ENCODE measurements at regions of chr5 and their contacts with region 1.

Region 1: GRCh38 chr5:128674825-128675446 is 136.9 kb upstream of the FBN2 start:
- DNase-seq: peak in 1 of 2 experiments; percentile 83
- H3K4me3 ChIP-seq: no peak overlapping the region
- H3K27ac ChIP-seq: no peak overlapping the region
- H3K4me1 ChIP-seq: peaks cover 0 to 3% (median 0%) of the 10 kb centered on the region in 4 experiments; a peak in 3 of 7 replicates
- H3K27me3 ChIP-seq: no peaks in the 10 kb centered on the region
- CTCF ChIP-seq: peak; percentile 41 to 82 (median 69)
- EP300 ChIP-seq: no peak
- POLR2A ChIP-seq: no peak
- RAD21 ChIP-seq: peak; percentile 73 to 80

Region 2: DNA sequence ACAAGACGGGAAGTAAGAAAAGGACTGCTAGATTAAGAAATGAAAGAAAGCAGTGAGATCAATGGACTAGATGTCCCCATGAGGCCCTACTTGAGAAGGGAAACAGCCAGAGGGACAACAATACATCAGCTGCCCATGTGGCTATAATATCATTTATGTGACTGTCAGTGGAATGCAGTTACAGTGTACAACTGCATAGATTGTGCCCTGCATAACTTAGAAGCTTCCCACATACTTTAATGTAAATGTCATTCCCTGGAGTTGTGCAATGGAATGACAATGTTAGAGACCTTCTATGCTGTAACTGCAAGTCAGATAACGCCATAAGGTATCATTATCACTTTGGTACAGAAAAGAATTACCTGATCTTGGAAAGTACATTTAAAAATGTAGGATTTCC is 204.3 kb before region 1 on chr5:
- CTCF ChIA-PET with region 1: no interaction called
- POLR2A ChIA-PET with region 1: no interaction called
- DNase-seq: no peak
- H3K4me3 ChIP-seq: no peak overlapping the region
- H3K27ac ChIP-seq: no peak overlapping the region
- H3K4me1 ChIP-seq: no peaks in the 10 kb centered on the region
- H3K27me3 ChIP-seq: no peaks in the 10 kb centered on the region
- CTCF ChIP-seq: no peak
- EP300 ChIP-seq: no peak
- POLR2A ChIP-seq: no peak
- RAD21 ChIP-seq: no peak

Region 3: DNA sequence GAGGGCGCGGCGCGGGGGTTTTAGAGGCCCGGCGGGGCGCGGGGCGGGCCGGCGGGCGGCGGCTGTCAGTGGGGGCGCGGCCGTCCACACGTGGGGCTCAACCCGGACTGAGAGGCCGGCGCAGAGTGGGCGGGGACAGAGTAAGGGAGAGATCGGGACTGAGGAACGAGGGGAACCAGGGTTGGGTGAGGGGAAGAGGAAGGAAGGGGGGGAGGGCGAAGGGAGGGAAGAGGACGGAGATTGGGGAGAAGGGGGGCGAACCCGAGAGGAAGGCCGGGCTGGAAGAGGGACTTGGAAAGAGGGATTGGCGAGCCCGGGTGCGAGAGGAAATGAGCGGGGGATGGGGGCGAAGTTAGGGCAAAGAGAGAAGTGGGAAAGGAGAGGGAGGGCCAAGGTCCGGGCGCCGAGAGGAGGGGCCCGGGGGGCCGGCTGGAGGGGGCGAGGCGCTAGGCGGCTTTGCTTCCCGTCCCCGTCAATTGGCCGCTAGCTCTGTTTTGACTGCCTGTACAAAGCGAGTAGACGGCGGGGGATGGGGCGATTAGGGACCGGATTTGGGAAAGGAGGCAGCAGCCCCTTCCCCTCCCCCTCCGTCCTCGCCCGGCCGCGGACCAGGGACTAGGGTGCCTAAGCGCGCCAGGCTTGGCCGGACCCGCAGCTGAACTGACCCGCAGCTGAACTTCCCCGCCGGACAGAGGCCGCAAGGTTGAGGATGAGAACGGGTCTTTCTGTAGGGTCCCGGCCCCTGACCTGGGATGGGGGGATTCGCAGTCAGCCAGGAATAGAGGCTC is 136.5 kb before region 1 on chr5:
- CTCF ChIA-PET with region 1: interaction called, 12 read pairs
- POLR2A ChIA-PET with region 1: no interaction called
- DNase-seq: peak; percentile 49 to 84
- H3K4me3 ChIP-seq: peak overlapping the region; percentile 38 to 78 (median 61)
- H3K27ac ChIP-seq: no peak overlapping the region
- H3K4me1 ChIP-seq: peaks cover 0 to 4% (median 2%) of the 10 kb centered on the region in 4 experiments; a peak in 3 of 7 replicates
- H3K27me3 ChIP-seq: peaks cover 2 to 24% (median 20%) of the 10 kb centered on the region in 4 experiments
- CTCF ChIP-seq: no peak
- EP300 ChIP-seq: no peak
- POLR2A ChIP-seq: peak in 1 of 2 experiments; percentile 53; a peak in 1 of 3 replicates
- RAD21 ChIP-seq: no peak; a peak in 1 of 4 replicates

Region 4: DNA sequence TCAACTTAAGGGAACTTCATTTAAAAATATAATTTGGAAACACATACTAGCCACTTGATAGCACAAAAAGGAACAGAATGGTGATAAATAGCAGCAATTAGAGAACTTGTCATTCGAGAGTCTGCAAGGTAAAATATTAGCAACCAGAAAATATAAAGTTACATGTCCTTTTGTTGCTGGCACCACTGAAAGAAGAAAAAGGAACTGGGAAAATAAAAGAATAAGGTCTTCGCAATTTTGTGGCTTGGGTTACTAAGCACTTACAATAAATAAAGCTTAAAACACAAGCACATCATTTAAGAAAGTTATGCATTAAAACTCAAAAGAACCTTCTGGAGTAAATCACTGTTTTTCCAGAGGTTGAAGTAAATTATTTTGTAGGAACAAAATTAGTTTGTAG is 13.0 kb after region 1 on chr5:
- CTCF ChIA-PET with region 1: interaction called, 16 read pairs
- POLR2A ChIA-PET with region 1: no interaction called
- DNase-seq: no peak
- H3K4me3 ChIP-seq: no peak overlapping the region
- H3K27ac ChIP-seq: no peak overlapping the region
- H3K4me1 ChIP-seq: peaks cover 0 to under 1% (median under 1%) of the 10 kb centered on the region in 4 experiments; a peak in 2 of 7 replicates
- H3K27me3 ChIP-seq: no peaks in the 10 kb centered on the region
- CTCF ChIP-seq: no peak
- EP300 ChIP-seq: no peak
- POLR2A ChIP-seq: no peak
- RAD21 ChIP-seq: no peak

Region 5: GRCh38 chr5:128695791-128696530 is 21.0 kb after region 1 on chr5:
- CTCF ChIA-PET with region 1: interaction called, 26 read pairs
- POLR2A ChIA-PET with region 1: no interaction called
- DNase-seq: no peak
- H3K4me3 ChIP-seq: no peak overlapping the region
- H3K27ac ChIP-seq: no peak overlapping the region
- H3K4me1 ChIP-seq: peaks cover 0 to 14% (median 3%) of the 10 kb centered on the region in 4 experiments; a peak in 5 of 7 replicates
- H3K27me3 ChIP-seq: no peaks in the 10 kb centered on the region
- CTCF ChIP-seq: peak in 2 of 3 experiments; percentile 58 to 75; a peak in 3 of 4 replicates
- EP300 ChIP-seq: no peak
- POLR2A ChIP-seq: no peak
- RAD21 ChIP-seq: peak; percentile 51 to 54

Measured in H1 (cell line).